ENCODE measurements at regions of chr4 and their contacts with region 1.

Region 1: GRCh38 chr4:184733654-184734524 is at the start of gene CENPU:
- DNase-seq: peak; percentile 91 to 98 (median 93)
- ATAC-seq: peak; percentile 97
- H3K4me3 ChIP-seq: peak within 1 kb of the TSS; percentile 87
- H3K4me3 Mint-ChIP-seq: peak within 1 kb of the TSS; percentile 93
- H3K27ac ChIP-seq: no peak within 1 kb of the TSS
- H3K27ac Mint-ChIP-seq: peak within 1 kb of the TSS; percentile 74
- H3K4me1 ChIP-seq: peaks cover 13% of the 10 kb centered on the region
- H3K4me1 Mint-ChIP-seq: peaks cover 17% of the 10 kb centered on the region
- H3K27me3 ChIP-seq: no peaks in the 10 kb centered on the region
- H3K27me3 Mint-ChIP-seq: no peaks in the 10 kb centered on the region
- CTCF ChIP-seq: no peak
- total RNA-seq, gene CENPU: 1.9 to 2.8 TPM

Region 2: DNA sequence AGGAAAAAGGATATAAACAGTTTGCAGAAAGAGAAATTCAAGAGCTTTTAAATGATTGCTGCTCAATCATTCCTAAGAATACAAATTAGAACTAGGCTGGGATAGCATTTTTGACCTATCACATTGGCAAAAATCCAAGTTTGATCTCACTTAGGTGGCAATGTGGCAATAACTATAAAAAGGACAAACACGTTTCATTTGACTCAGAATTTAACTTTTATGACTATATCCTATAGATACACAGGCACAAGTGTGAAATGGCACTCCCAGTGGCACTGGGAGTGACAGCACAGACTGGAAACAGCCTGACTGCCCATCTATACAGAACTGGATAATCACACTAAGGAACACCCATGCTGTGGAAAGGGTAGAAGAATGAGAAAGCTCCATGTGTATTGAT is 11.1 kb before region 1 on chr4:
- CTCF ChIA-PET with region 1: no interaction called
- POLR2A ChIA-PET with region 1: interaction called, 12 read pairs
- intact Hi-C with region 1: no loop called
- DNase-seq: no peak
- ATAC-seq: no peak
- H3K4me3 ChIP-seq: no peak overlapping the region
- H3K4me3 Mint-ChIP-seq: no peak overlapping the region
- H3K27ac ChIP-seq: no peak overlapping the region
- H3K27ac Mint-ChIP-seq: no peak overlapping the region
- H3K4me1 ChIP-seq: no peaks in the 10 kb centered on the region
- H3K4me1 Mint-ChIP-seq: no peaks in the 10 kb centered on the region
- H3K27me3 ChIP-seq: no peaks in the 10 kb centered on the region
- H3K27me3 Mint-ChIP-seq: no peaks in the 10 kb centered on the region
- CTCF ChIP-seq: no peak

Region 3: DNA sequence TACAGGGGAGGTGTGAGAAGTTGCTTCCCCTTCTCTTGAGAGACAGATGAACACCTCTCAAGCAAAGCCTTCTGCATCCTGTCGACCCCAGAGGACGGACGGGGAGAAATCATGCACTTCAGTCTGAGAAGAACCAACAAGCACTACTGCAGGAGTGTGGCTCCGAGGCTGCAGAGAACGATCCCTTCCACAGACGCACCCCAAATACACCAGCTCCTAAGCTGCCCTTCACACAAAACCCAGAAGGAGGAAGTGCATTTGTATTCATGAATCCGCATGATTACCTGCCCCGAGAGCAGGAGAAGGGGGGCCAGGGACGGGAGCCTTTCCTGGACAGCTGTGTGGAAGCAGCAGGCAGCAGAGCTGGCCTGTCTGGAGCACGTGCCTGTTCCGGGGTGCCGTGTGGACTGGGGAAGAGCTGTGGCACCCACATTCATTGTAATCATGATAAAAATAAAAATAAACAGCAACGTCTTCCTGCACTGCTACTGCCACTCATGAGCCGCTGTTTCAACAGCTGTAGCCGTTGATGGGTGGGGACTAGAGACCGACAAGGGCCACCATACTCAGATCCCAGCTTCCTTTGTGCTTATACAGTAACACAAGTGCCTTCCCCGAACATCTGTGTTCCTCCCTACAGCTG is 49.0 kb after region 1 on chr4:
- CTCF ChIA-PET with region 1: no interaction called
- POLR2A ChIA-PET with region 1: no interaction called
- intact Hi-C with region 1: no loop called
- DNase-seq: no peak
- ATAC-seq: peak; percentile 49
- H3K4me3 ChIP-seq: no peak overlapping the region
- H3K4me3 Mint-ChIP-seq: peak overlapping the region; percentile 43
- H3K27ac ChIP-seq: no peak overlapping the region
- H3K27ac Mint-ChIP-seq: peak overlapping the region; percentile 52
- H3K4me1 ChIP-seq: peaks cover 2% of the 10 kb centered on the region
- H3K4me1 Mint-ChIP-seq: peaks cover 16% of the 10 kb centered on the region
- H3K27me3 ChIP-seq: no peaks in the 10 kb centered on the region
- H3K27me3 Mint-ChIP-seq: no peaks in the 10 kb centered on the region
- CTCF ChIP-seq: no peak

Region 4: DNA sequence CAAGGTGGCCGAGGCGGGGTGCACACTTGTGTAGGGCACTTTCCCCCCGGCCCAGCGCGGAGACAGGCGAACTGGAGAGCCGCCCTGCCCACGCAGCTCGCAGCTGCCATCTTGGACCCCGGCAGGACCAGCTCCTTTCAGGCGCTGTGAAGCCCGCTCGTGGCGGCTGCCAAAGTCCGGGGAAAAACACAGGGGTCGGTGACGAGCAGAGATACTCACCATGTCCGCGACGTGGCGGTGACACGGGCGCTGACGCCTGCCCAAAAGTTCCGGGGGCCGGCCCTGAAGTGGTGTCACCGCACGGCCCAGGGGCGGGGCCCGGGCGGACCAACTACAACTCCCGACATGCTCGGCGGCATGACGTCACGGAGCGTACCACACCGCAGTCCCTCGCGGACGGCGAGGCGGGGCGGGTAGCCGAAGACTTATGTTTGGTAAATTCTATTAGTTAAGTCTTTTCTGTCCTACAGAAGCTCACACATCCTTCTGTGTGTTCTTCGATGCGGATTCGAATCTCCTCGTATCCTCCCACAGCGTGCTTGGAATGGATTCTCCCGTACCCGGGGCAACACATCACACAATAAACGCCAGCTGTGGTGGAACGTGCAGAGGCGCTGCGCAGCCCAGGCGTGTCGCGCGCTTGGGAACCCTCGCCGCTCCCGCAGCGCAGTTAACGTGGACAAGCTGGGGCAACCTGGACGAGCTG is 691.9 kb after region 1 on chr4 and contains the start of gene UFSP2:
- CTCF ChIA-PET with region 1: no interaction called
- POLR2A ChIA-PET with region 1: no interaction called
- intact Hi-C with region 1: loop called in 1 of 2 experiments (anchors 5 kb)
- DNase-seq: peak; percentile 78 to 97 (median 88)
- ATAC-seq: peak; percentile 85
- H3K4me3 ChIP-seq: peak within 1 kb of the TSS; percentile 99
- H3K4me3 Mint-ChIP-seq: peak within 1 kb of the TSS; percentile 94
- H3K27ac ChIP-seq: peak within 1 kb of the TSS; percentile 88 to 99
- H3K27ac Mint-ChIP-seq: peak within 1 kb of the TSS; percentile 91
- H3K4me1 ChIP-seq: peaks cover 18% of the 10 kb centered on the region
- H3K4me1 Mint-ChIP-seq: peaks cover 31% of the 10 kb centered on the region
- H3K27me3 ChIP-seq: no peaks in the 10 kb centered on the region
- H3K27me3 Mint-ChIP-seq: peaks cover 6% of the 10 kb centered on the region
- CTCF ChIP-seq: no peak
- total RNA-seq, gene UFSP2: 14.5 to 16.6 TPM

Measured in CD4-positive, alpha-beta T cell (primary cell).